IMR-90 (cell line): ENCODE measurements at regions of chr20 and their contacts with region 1.

Region 1: DNA sequence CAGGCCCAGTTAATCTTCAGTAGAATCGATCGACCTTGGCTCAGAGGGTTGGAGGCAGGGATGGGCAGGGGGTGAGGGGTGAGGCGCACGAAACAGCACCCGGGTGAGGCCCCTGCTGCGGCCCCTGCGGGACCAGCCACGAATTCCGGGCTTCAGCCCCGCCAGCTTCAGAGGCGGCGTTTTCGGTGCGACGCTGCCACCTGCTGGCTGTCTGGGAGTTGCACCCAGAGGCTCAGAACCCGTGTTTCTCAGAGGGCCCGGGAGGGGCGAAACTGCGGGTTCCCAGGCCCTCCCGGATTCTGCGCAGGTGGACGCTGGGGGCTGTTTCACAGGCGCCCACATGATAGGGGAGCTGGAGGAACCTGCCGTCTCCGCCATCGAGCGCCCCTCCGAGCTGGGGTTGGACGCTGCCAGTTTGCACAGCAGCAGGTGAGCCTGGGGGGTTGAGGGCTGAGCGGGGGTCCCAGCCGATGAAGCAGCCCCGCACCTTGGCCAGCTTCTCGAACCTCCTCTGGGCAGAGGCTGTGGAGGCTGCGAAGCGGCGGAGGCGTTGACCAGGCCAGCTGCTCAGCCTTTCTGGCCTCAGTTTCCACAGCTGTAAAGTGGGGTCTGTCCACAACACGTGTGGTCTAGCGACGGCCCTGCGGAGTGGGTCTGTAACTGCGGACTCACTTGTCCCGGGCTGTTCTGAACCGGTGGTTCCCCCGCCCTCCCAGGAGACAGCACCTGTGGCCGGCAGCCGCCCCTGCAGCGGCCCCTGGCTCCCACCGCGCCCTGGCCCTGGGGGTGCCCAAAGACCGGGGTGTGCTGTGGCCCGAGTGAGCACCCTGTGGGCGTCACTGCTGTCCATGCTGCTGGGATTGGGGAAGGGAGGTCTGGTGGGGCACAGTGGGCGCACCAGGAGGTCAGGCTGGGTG is 2.5 kb upstream of the BHLHE23 start:
- DNase-seq: peak; percentile 42
- ATAC-seq: peak; percentile 96
- H3K4me3 ChIP-seq: no peak overlapping the region
- H3K27ac ChIP-seq: no peak overlapping the region
- H3K4me1 ChIP-seq: no peaks in the 10 kb centered on the region
- H3K27me3 ChIP-seq: peaks cover 83% of the 10 kb centered on the region
- CTCF ChIP-seq: peak; percentile 95
- POLR2A ChIP-seq: no peak
- RAD21 ChIP-seq: peak; percentile 95

Region 2: DNA sequence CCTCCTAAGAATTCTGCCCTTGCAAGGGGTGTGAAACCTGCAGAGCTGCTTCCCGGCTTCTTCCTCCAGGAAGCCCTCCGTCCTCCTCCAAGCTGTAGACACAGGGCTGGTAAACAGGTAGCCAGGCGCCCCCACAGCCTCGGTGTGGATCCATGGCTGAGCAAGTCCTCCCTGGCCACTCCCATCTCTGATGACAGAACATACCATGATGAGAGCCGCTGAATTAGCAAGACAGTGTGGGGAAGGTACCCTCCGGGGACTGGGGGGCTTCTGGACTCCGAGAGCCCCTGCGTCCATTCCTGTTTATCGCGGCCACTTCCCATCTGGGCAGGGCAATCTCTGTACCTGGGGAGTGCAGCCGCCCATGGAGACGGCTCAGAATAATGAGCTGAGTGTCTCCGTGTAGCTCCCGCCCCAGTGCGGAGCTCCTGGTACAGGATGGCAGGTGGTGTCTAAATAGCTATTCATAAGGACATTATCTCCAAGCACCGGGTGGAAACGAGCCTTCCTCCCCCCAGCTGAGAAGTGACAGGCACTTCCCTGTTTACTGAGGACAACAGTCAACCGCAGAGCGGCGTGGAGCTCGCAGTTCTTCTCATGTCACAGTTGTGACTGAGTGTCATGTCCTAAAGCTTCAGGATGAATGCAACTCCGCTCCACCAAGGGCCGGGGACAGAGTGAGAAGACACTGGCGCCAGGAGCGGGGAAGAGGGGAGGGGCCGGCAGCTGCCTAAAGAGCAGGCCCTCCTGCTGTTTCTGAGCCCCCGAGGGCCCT is 323.3 kb before region 1 on chr20:
- CTCF ChIA-PET with region 1: no interaction called
- POLR2A ChIA-PET with region 1: no interaction called
- dilution Hi-C with region 1: no loop called
- in situ Hi-C with region 1: loop called (anchors 25 kb)
- intact Hi-C with region 1: no loop called
- DNase-seq: no peak
- ATAC-seq: no peak
- H3K4me3 ChIP-seq: no peak overlapping the region
- H3K27ac ChIP-seq: no peak overlapping the region
- H3K4me1 ChIP-seq: no peaks in the 10 kb centered on the region
- H3K27me3 ChIP-seq: peaks cover 33% of the 10 kb centered on the region
- CTCF ChIP-seq: no peak
- POLR2A ChIP-seq: no peak
- RAD21 ChIP-seq: no peak

Region 3: GRCh38 chr20:62808211-62808865 is 201.0 kb before region 1 on chr20:
- CTCF ChIA-PET with region 1: no interaction called
- POLR2A ChIA-PET with region 1: no interaction called
- dilution Hi-C with region 1: no loop called
- in situ Hi-C with region 1: no loop called
- intact Hi-C with region 1: loop called (anchors 5 kb)
- DNase-seq: peak; percentile 48
- ATAC-seq: peak; percentile 64
- H3K4me3 ChIP-seq: no peak overlapping the region
- H3K27ac ChIP-seq: no peak overlapping the region
- H3K4me1 ChIP-seq: peaks cover 10% of the 10 kb centered on the region
- H3K27me3 ChIP-seq: no peaks in the 10 kb centered on the region
- CTCF ChIP-seq: peak; percentile 81
- POLR2A ChIP-seq: no peak
- RAD21 ChIP-seq: peak; percentile 77

Region 4: DNA sequence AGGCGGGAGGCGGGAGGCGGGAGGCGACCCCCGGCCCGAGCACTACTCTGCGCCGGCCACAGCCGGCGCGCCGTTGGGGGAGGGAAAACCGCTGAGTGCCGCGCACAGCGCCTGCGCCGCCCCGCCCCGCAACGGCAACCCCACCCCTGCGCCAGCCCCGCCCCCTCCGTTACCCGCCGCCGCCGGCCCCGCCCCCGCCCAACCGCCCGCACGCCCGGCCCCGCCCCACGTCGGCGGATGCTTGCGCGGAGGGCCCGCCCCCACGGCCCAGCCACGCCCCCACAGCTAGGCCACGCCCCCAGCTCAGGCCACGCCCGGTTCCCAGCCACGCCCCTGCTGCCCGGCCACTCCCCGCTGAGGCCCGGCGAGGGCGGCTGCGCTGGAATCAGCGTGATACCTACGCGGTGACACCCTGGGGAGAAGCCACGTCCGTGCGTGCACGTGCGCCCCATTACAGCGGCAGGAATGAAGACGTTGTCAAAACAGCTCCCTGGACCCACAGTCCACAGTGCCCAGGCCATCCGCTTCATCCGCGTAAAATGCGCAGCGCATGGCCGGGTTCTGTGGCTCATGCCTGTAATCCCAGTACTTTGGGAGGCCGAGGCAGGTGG is 147.5 kb before region 1 on chr20 and contains the start of gene TCFL5:
- CTCF ChIA-PET with region 1: no interaction called
- POLR2A ChIA-PET with region 1: no interaction called
- dilution Hi-C with region 1: no loop called
- in situ Hi-C with region 1: no loop called
- intact Hi-C with region 1: no loop called
- DNase-seq: peak; percentile 76
- ATAC-seq: peak; percentile 94
- H3K4me3 ChIP-seq: peak within 1 kb of the TSS; percentile 100
- H3K27ac ChIP-seq: peak within 1 kb of the TSS; percentile 87
- H3K4me1 ChIP-seq: 0 out of 2 replicates have a peak, but pooled peaks cover 3% of the 10 kb centered on the region
- H3K27me3 ChIP-seq: no peaks in the 10 kb centered on the region; the same call in 1 of the 2 replicates
- CTCF ChIP-seq: no peak
- POLR2A ChIP-seq: no peak
- RAD21 ChIP-seq: no peak
- total RNA-seq, gene TCFL5: 8.2 and 8.3 TPM in 2 replicates

Region 5: DNA sequence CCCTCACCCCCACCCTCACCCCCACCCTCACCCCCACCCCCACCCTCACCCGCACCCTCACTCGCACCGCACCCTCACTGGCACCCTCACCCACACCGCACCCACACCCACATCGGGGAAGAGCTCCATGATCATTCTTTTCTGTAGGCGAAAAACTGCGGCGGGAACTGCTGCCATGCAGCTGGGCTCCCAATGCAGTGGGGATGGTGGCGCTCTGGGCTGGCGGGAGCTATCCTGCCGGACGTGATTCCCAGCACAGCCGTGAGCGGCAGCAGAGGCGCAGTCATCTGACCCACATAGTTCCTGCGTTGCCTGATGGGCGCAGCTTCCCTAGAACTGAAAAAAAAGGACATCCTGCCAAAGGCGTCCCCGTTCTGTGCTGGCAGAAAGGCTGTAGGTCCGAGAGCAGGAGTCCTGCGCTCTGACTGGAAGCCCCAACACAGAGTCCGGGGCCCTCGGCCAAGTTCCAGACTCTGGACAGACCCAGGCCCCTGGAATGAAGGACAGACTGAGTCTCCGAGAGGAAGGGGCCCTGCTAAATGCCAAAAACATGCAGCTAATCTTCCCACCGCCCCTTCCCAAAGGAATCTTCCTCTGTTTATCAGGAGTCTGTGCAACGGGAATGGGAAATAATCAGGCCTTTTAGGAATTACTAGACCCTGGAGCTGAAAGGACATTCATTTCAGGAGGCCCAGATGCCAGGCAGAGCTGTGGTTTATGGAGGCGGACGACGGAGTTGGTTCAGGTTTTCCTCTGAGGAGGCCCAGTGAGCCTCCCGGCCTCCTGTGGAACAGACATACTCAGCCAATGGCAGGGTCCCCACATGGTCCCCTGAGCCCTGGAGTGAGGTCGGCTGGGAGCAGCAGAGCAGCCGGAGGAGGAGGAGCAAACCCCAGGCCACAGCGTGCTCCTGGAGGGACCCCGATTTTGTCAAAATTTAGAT is 133.6 kb before region 1 on chr20:
- CTCF ChIA-PET with region 1: interaction called, 3 read pairs
- POLR2A ChIA-PET with region 1: no interaction called
- dilution Hi-C with region 1: no loop called
- in situ Hi-C with region 1: loop called (anchors 10 kb)
- intact Hi-C with region 1: loop called (anchors 1 kb)
- DNase-seq: peak; percentile 83
- ATAC-seq: peak; percentile 98
- H3K4me3 ChIP-seq: peak overlapping the region; percentile 42; the same call in 1 of the 2 replicates
- H3K27ac ChIP-seq: peak overlapping the region; percentile 32
- H3K4me1 ChIP-seq: peaks cover 7% of the 10 kb centered on the region; the same call in 1 of the 2 replicates
- H3K27me3 ChIP-seq: 0 out of 2 replicates have a peak, but pooled peaks cover under 1% of the 10 kb centered on the region
- CTCF ChIP-seq: peak; percentile 64
- POLR2A ChIP-seq: no peak
- RAD21 ChIP-seq: peak; percentile 50

Region 6: GRCh38 chr20:62900052-62900691 is 109.1 kb before region 1 on chr20:
- CTCF ChIA-PET with region 1: no interaction called
- POLR2A ChIA-PET with region 1: no interaction called
- dilution Hi-C with region 1: no loop called
- in situ Hi-C with region 1: no loop called
- intact Hi-C with region 1: loop called (anchors 1 kb)
- DNase-seq: peak; percentile 64
- ATAC-seq: peak; percentile 90
- H3K4me3 ChIP-seq: no peak overlapping the region
- H3K27ac ChIP-seq: no peak overlapping the region
- H3K4me1 ChIP-seq: peaks cover 26% of the 10 kb centered on the region
- H3K27me3 ChIP-seq: no peaks in the 10 kb centered on the region
- CTCF ChIP-seq: peak; percentile 89
- POLR2A ChIP-seq: 0 out of 2 replicates have a peak, but pooled peaks have one; percentile 22
- RAD21 ChIP-seq: peak; percentile 83

Region 7: GRCh38 chr20:62972270-62973032 is 36.9 kb before region 1 on chr20:
- CTCF ChIA-PET with region 1: interaction called, 12 read pairs
- POLR2A ChIA-PET with region 1: no interaction called
- dilution Hi-C with region 1: no loop called
- in situ Hi-C with region 1: no loop called
- intact Hi-C with region 1: loop called (anchors 1 kb)
- DNase-seq: peak; percentile 69
- ATAC-seq: peak; percentile 99
- H3K4me3 ChIP-seq: peak overlapping the region; percentile 20; the same call in 1 of the 2 replicates
- H3K27ac ChIP-seq: no peak overlapping the region
- H3K4me1 ChIP-seq: no peaks in the 10 kb centered on the region
- H3K27me3 ChIP-seq: peaks cover 68% of the 10 kb centered on the region
- CTCF ChIP-seq: peak; percentile 94
- POLR2A ChIP-seq: 0 out of 2 replicates have a peak, but pooled peaks have one; percentile 30
- RAD21 ChIP-seq: peak; percentile 94

Region 8: DNA sequence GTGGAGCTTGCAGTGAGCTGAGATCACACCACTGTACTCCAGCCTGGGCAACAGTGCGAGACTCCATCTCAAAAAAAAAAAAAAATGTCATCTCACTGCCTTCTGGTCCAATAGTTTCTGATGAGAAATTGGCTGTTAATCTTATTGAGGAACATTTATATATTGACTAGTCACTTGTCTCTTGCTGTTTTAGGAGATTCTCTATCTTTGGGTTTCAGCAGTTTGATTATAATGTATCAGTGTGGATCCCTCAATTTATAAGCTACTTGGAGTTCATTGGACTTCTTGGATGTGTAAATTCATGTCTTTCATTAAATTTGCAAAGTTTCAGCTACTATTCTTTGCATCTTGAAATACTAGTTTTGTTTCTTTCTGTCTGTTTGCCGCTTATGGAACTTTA is 709.7 kb after region 1 on chr20:
- CTCF ChIA-PET with region 1: no interaction called
- POLR2A ChIA-PET with region 1: no interaction called
- dilution Hi-C with region 1: no loop called
- in situ Hi-C with region 1: no loop called
- intact Hi-C with region 1: no loop called
- DNase-seq: no peak
- ATAC-seq: no peak
- H3K4me3 ChIP-seq: no peak overlapping the region
- H3K27ac ChIP-seq: no peak overlapping the region
- H3K4me1 ChIP-seq: no peaks in the 10 kb centered on the region
- H3K27me3 ChIP-seq: no peaks in the 10 kb centered on the region
- CTCF ChIP-seq: no peak
- POLR2A ChIP-seq: no peak
- RAD21 ChIP-seq: no peak